Activated CD4-positive, alpha-beta T cell treated with anti-CD3 and anti-CD28 coated beads for 36 hours (primary cell): ENCODE measurements at regions of chr11 and their contacts with region 1.

Region 1: GRCh38 chr11:14907411-14908213 is 15.6 kb upstream of the CYP2R1 start:
- DNase-seq: peak; percentile 94
- ATAC-seq: peak; percentile 75
- H3K4me3 Mint-ChIP-seq: no peak overlapping the region
- H3K27ac Mint-ChIP-seq: no peak overlapping the region
- H3K4me1 Mint-ChIP-seq: peaks cover 41% of the 10 kb centered on the region
- H3K27me3 Mint-ChIP-seq: no peaks in the 10 kb centered on the region

Region 2: GRCh38 chr11:14119357-14119756 is 788.3 kb before region 1 on chr11:
- CTCF ChIA-PET with region 1: no interaction called
- POLR2A ChIA-PET with region 1: no interaction called
- intact Hi-C with region 1: no loop called
- DNase-seq: peak; percentile 52
- ATAC-seq: peak; percentile 94
- H3K4me3 Mint-ChIP-seq: no peak overlapping the region
- H3K27ac Mint-ChIP-seq: no peak overlapping the region
- H3K4me1 Mint-ChIP-seq: peaks cover 20% of the 10 kb centered on the region
- H3K27me3 Mint-ChIP-seq: no peaks in the 10 kb centered on the region

Region 3: GRCh38 chr11:14300661-14301304 is 606.8 kb before region 1 on chr11:
- CTCF ChIA-PET with region 1: interaction called, 4 read pairs
- POLR2A ChIA-PET with region 1: no interaction called
- intact Hi-C with region 1: loop called in 1 of 2 experiments (anchors 5 kb)
- DNase-seq: peak; percentile 66
- ATAC-seq: peak; percentile 97
- H3K4me3 Mint-ChIP-seq: no peak overlapping the region
- H3K27ac Mint-ChIP-seq: no peak overlapping the region
- H3K4me1 Mint-ChIP-seq: no peaks in the 10 kb centered on the region
- H3K27me3 Mint-ChIP-seq: no peaks in the 10 kb centered on the region

Region 4: DNA sequence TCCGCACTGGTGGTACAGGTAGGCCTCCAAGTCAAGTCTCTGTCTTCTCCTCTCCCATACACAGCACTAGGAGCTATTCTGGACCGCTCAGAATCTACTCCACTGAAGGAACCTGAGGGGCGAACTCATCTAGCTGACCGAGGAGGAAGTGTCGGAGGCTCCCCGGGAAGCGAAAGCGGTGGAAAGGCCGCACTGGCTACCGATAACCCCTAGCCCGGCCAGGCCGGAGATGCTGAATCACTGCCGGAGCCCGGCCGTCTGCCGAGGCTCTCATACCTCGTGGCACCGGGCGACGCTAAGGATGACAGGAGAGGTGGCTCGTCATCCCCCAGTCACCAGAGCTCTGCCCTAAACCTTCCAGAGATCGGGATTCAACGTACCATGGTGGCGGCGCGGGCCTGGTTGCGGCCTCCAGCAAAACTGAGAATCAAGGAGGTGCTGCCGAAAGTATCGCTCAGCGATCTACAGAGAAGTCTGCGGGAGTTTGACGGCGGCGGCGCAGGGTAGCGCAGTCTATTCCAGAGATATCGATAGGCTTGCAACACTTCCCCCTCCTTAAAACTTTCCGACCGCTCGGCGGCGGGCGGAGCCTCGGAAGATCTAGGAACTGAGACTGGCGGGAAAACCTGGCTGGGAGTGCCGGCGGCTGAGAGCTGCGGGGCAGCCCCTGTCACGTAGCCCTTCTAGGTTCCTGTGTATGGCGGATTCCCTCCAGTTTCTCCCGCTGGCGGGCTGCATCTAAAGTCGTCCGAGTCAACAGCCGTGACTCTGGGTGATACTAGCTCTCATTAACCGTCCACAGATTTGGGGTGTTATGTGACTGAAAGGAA is 387.5 kb before region 1 on chr11 and contains the start of gene PSMA1:
- CTCF ChIA-PET with region 1: interaction called, 13 read pairs
- POLR2A ChIA-PET with region 1: interaction called, 3 read pairs
- intact Hi-C with region 1: loop called (anchors 1 kb)
- DNase-seq: peak; percentile 98
- ATAC-seq: peak; percentile 87
- H3K4me3 Mint-ChIP-seq: peak within 1 kb of the TSS; percentile 93
- H3K27ac Mint-ChIP-seq: peak within 1 kb of the TSS; percentile 95
- H3K4me1 Mint-ChIP-seq: peaks cover 25% of the 10 kb centered on the region
- H3K27me3 Mint-ChIP-seq: no peaks in the 10 kb centered on the region
- total RNA-seq, gene PSMA1: 231 to 330 TPM

Region 5: DNA sequence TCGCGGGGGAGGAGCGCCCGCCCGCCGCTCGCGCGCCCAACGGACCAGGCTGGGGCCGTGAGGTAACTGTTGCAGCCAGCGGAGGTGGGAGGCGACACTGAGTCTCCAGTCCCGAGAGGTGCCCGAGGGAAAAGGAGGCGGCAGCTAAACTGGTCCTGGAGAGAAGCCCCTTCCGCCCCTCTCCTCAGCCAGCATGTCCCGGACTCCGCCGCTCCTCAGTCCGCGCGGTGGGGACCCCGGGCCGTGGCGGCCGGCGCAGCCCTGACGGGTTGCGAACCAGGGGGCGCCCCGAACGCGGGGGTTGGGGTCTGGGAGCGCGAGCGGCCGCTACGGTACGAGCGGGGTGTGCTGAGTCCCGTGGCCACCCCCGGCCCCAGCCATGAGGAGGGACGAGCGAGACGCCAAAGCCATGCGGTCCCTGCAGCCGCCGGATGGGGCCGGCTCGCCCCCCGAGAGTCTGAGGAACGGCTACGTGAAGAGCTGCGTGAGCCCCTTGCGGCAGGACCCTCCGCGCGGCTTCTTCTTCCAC is 263.9 kb before region 1 on chr11 and contains the start of gene PDE3B:
- CTCF ChIA-PET with region 1: interaction called, 17 read pairs
- POLR2A ChIA-PET with region 1: interaction called, 3 read pairs
- intact Hi-C with region 1: loop called (anchors 1 to 2 kb)
- DNase-seq: peak; percentile 88
- ATAC-seq: peak; percentile 76
- H3K4me3 Mint-ChIP-seq: peak within 1 kb of the TSS; percentile 75
- H3K27ac Mint-ChIP-seq: peak within 1 kb of the TSS; percentile 89
- H3K4me1 Mint-ChIP-seq: peaks cover 46% of the 10 kb centered on the region
- H3K27me3 Mint-ChIP-seq: no peaks in the 10 kb centered on the region
- total RNA-seq, gene PDE3B: 24.7 to 25.8 TPM

Region 6: DNA sequence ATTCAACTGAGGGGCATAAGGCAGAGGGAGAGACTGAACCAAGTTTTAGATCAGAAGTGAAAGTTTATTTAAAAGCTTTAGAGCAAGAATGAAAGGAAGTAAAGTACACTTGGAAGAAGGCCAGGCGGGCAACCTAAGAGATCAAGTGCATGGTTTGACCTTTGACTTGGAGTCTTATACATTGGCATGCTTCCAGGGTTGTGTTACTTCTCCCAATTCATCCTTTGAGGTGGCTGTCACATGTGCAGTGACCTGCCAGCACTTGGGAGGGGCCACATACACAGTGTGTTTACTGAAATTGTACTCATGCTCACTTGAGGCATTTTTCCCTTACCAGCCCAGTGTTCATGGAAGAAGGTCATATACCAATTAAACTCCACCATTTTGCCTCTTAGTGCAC is 45.9 kb before region 1 on chr11:
- CTCF ChIA-PET with region 1: interaction called, 10 read pairs
- POLR2A ChIA-PET with region 1: no interaction called
- intact Hi-C with region 1: no loop called
- DNase-seq: no peak
- ATAC-seq: no peak
- H3K4me3 Mint-ChIP-seq: no peak overlapping the region
- H3K27ac Mint-ChIP-seq: no peak overlapping the region
- H3K4me1 Mint-ChIP-seq: peaks cover 19% of the 10 kb centered on the region
- H3K27me3 Mint-ChIP-seq: no peaks in the 10 kb centered on the region

Region 7: GRCh38 chr11:14953904-14954303 is 46.3 kb after region 1 on chr11:
- CTCF ChIA-PET with region 1: interaction called, 22 read pairs
- POLR2A ChIA-PET with region 1: no interaction called
- intact Hi-C with region 1: no loop called
- DNase-seq: no peak
- ATAC-seq: no peak
- H3K4me3 Mint-ChIP-seq: no peak overlapping the region
- H3K27ac Mint-ChIP-seq: no peak overlapping the region
- H3K4me1 Mint-ChIP-seq: no peaks in the 10 kb centered on the region
- H3K27me3 Mint-ChIP-seq: no peaks in the 10 kb centered on the region

Region 8: DNA sequence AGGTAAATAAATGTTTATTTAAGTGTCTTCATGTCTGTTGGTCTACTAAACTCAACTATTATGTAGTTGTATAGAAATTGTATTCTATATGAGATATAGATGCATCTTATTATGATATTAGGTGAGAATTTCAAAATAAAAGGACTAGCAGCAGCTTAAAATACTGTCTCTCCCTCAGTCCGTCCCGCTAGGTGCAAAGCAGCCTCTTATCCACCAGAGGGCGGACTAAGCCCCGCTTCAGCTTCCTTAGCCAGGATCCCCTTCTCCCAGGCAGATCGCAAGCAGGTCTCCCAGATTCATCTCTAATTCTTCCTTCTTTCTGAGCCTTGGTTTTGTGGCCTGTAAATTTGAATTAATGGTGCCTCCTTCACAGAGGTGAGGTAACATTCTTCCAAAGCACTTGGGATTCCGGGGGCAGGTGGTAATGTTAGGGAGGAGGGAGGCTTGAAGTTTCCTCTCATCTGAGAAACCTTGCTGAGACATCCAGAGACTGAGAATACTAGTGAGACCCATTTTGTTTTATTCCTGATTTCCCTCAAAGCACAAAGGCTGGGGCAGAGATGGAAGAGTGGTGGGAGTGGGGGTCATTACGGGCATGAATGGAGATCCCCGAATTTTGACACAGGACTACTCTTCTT is 193.6 kb after region 1 on chr11:
- CTCF ChIA-PET with region 1: interaction called, 16 read pairs
- POLR2A ChIA-PET with region 1: no interaction called
- intact Hi-C with region 1: no loop called
- DNase-seq: peak; percentile 74
- ATAC-seq: peak; percentile 79
- H3K4me3 Mint-ChIP-seq: no peak overlapping the region
- H3K27ac Mint-ChIP-seq: no peak overlapping the region
- H3K4me1 Mint-ChIP-seq: peaks cover 3% of the 10 kb centered on the region
- H3K27me3 Mint-ChIP-seq: peaks cover 17% of the 10 kb centered on the region

Region 9: GRCh38 chr11:15318814-15319213 is 411.2 kb after region 1 on chr11:
- CTCF ChIA-PET with region 1: no interaction called
- POLR2A ChIA-PET with region 1: no interaction called
- intact Hi-C with region 1: no loop called
- DNase-seq: no peak
- ATAC-seq: no peak
- H3K4me3 Mint-ChIP-seq: no peak overlapping the region
- H3K27ac Mint-ChIP-seq: no peak overlapping the region
- H3K4me1 Mint-ChIP-seq: no peaks in the 10 kb centered on the region
- H3K27me3 Mint-ChIP-seq: no peaks in the 10 kb centered on the region